ENCODE measurements at regions of chr17 and their contacts with region 1.

Region 1: DNA sequence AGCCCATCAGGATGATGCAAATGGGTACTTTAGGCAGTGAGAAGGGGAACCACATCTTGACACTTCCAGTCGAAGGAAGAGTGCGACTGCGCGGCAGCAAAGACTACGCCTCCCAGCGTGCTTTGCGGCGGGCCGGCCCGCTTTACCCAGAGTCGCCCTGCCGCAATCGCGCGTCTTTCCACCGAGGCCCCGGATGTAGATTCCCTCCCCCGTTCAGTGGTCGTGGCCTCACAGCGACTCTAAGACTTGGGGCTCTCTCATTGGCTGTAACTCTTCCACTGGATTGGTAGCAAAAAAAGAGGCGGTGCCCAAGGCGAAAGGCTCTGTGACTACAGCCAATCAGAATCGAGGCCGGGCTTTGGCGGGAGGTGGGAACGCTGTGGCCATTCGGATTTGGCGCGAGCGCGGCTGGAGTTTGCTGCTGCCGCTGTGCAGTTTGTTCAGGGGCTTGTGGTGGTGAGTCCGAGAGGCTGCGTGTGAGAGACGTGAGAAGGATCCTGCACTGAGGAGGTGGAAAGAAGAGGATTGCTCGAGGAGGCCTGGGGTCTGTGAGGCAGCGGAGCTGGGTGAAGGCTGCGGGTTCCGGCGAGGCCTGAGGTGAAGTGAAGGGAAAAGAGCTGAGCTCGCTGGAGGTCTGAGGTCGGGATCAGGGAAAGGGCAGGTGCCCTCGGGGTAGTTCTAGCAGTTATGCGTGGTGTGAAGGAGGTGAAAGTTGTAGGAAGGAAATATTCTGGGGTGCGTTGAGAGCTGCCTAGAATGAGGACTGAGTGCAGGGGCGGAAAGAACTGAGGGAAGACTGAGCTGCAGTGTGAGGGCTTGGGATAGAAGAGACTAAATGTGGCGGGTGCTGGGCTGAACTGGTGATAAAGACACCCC is at the start of gene CDC6:
- DNase-seq: peak; percentile 92
- H3K4me3 ChIP-seq: peak within 1 kb of the TSS; percentile 47 to 69 (median 60)
- H3K27ac ChIP-seq: peak within 1 kb of the TSS in 3 of 4 donors; percentile 64 to 84 (median 67)
- H3K4me1 ChIP-seq: peaks cover 19 to 48% (median 26%) of the 10 kb centered on the region in 3 donors
- H3K27me3 ChIP-seq: no peaks in the 10 kb centered on the region
- CTCF ChIP-seq: peak in 1 of 6 experiments; percentile 51
- POLR2A ChIP-seq: peak in 2 of 4 donors; percentile 46 to 78
- total RNA-seq, gene CDC6: 2.9 to 17.8 (median 9.8) TPM

Region 2: DNA sequence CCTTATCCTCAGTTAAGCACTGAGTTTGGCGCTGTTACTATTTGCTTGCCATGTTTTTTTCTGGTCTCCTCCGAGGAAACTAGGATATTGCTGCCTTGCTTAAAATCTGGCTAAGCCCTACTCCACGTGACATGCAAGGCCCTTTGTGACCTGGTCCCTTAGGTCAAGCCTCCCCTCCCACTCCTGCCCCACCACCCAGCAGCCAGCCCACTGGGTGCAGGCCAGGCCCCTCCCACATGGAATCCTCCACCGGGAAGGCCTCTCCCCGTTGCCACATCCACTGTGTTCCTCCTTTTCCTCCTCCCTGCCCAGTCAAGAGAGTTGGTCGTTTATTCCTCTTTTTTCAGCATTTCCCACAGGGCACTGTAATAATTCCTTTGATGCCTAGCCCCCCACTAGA is 290.9 kb before region 1 on chr17:
- intact Hi-C with region 1: no loop called
- DNase-seq: no peak
- H3K4me3 ChIP-seq: no peak overlapping the region
- H3K27ac ChIP-seq: peak overlapping the region in 3 of 4 donors; percentile 18 to 34 (median 21)
- H3K4me1 ChIP-seq: peaks cover 0 to 26% (median 0%) of the 10 kb centered on the region in 3 donors
- H3K27me3 ChIP-seq: no peaks in the 10 kb centered on the region
- CTCF ChIP-seq: no peak
- POLR2A ChIP-seq: no peak

Region 3: GRCh38 chr17:40203131-40203530 is 84.6 kb before region 1 on chr17:
- intact Hi-C with region 1: loop called (anchors 5 kb)
- DNase-seq: no peak
- H3K4me3 ChIP-seq: no peak overlapping the region
- H3K27ac ChIP-seq: peak overlapping the region in 1 of 4 donors; percentile 0
- H3K4me1 ChIP-seq: peaks cover 0 to 10% (median 0%) of the 10 kb centered on the region in 3 donors
- H3K27me3 ChIP-seq: peaks cover 0 to 1% (median 0%) of the 10 kb centered on the region in 4 donors
- CTCF ChIP-seq: no peak
- POLR2A ChIP-seq: no peak

Measured in esophagus squamous epithelium (tissue), 5 donors.